PC-9 (cell line): ENCODE measurements at regions of chr7 and their contacts with region 1.

Region 1: DNA sequence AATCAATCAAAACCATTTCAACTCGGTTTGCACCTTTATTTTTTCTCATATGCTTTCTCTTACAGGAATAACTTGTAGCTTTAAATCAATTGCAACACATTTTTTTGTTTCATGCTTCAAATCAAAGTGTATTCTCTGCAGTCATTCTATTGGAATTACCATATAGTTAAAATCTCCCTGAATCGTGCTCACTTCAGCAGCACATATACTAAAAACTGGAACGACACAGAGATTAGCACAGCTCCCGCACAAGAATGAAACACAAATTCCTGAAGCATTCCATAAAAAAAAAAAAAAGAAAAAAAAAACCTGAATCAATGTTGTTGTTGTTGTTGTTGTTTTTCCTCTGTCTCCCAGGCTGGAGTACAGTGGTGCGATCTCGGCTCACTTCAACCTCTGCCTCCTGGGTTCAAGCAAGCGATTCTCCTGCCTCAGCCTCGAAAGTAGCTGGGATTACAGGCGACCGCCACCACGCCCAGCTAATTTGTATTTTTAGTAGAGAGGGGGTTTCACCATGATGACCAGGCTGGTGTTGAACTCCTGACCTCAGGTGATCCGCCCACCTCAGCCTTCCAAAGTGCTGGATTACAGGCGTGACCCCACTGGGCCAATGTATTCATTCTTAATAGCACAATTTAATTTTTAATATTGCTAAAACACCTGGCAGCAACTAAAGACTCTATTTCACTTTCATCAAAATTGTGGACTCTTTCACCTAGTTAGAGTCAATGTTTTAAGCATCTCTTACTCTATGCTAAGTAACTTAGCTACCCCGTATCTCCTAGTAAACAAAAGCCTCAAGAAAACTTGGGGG is 26.3 kb downstream of the ANKRD61 start:
- DNase-seq: no peak
- H3K4me3 ChIP-seq: peak overlapping the region; percentile 87
- H3K27ac ChIP-seq: peak overlapping the region; percentile 88; the same call in 1 of the 2 replicates
- H3K4me1 ChIP-seq: peaks cover 16% of the 10 kb centered on the region
- H3K27me3 ChIP-seq: no peaks in the 10 kb centered on the region
- CTCF ChIP-seq: no peak

Region 2: DNA sequence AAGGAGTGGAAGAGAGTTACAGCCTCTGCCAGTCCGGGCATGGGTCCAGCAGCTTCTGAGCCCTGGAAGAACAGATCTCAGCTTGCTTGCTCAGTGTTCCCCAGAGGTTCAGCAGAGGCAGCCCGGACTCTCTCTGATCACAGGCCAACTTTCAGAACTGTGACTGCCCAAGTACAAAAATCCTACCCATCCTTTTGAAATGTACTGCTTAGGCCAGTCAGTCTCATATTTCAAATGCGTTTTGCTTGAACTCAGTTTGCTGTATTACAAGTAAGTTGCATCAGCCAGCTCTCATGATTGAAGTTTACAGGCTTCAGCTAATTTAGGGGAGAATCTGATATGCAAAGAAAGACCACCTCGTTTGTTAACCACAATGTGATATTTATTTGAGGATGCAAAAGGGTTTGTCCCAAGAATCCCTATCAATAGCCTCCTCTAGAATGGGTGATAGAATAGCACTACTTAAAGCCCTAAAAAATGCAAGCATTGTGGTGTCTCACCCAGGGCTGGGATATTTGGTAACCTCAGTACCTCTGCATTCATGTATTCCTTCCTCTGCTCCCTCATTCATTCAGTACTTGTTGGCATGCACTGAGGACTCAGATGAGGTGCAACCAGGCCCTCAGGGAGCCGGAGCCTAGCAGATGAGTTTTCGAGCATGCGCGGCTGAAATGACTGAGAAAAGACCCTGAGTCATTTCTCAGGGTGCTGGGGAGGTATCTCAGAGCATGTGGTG is 41.4 kb before region 1 on chr7:
- CTCF ChIA-PET with region 1: no interaction called
- POLR2A ChIA-PET with region 1: interaction called, 14 read pairs
- intact Hi-C with region 1: no loop called
- DNase-seq: no peak
- H3K4me3 ChIP-seq: no peak overlapping the region
- H3K27ac ChIP-seq: peak overlapping the region; percentile 90
- H3K4me1 ChIP-seq: peaks cover 35% of the 10 kb centered on the region
- H3K27me3 ChIP-seq: no peaks in the 10 kb centered on the region
- CTCF ChIP-seq: no peak

Region 3: GRCh38 chr7:6026011-6026819 is 31.3 kb before region 1 on chr7:
- CTCF ChIA-PET with region 1: no interaction called
- POLR2A ChIA-PET with region 1: no interaction called
- intact Hi-C with region 1: no loop called
- DNase-seq: peak in 1 of 2 experiments; percentile 29
- H3K4me3 ChIP-seq: no peak overlapping the region
- H3K27ac ChIP-seq: no peak overlapping the region
- H3K4me1 ChIP-seq: no peaks in the 10 kb centered on the region
- H3K27me3 ChIP-seq: no peaks in the 10 kb centered on the region
- CTCF ChIP-seq: peak; percentile 57; the same call in 1 of the 2 replicates

Region 4: GRCh38 chr7:6071406-6071805 is 13.9 kb after region 1 on chr7:
- CTCF ChIA-PET with region 1: no interaction called
- POLR2A ChIA-PET with region 1: interaction called, 73 read pairs
- intact Hi-C with region 1: no loop called
- DNase-seq: no peak
- H3K4me3 ChIP-seq: no peak overlapping the region
- H3K27ac ChIP-seq: no peak overlapping the region
- H3K4me1 ChIP-seq: peaks cover 9% of the 10 kb centered on the region
- H3K27me3 ChIP-seq: no peaks in the 10 kb centered on the region
- CTCF ChIP-seq: no peak

Region 5: GRCh38 chr7:6130007-6130587 is 72.6 kb after region 1 on chr7:
- CTCF ChIA-PET with region 1: interaction called, 16 read pairs
- POLR2A ChIA-PET with region 1: no interaction called
- intact Hi-C with region 1: no loop called
- DNase-seq: no peak
- H3K4me3 ChIP-seq: no peak overlapping the region
- H3K27ac ChIP-seq: no peak overlapping the region
- H3K4me1 ChIP-seq: no peaks in the 10 kb centered on the region
- H3K27me3 ChIP-seq: no peaks in the 10 kb centered on the region
- CTCF ChIP-seq: no peak

Region 6: GRCh38 chr7:7221602-7222038 is 1164.1 kb after region 1 on chr7:
- CTCF ChIA-PET with region 1: no interaction called
- POLR2A ChIA-PET with region 1: no interaction called
- intact Hi-C with region 1: no loop called
- DNase-seq: peak; percentile 15 to 71
- H3K4me3 ChIP-seq: no peak overlapping the region
- H3K27ac ChIP-seq: peak overlapping the region; percentile 54
- H3K4me1 ChIP-seq: peaks cover 19% of the 10 kb centered on the region
- H3K27me3 ChIP-seq: no peaks in the 10 kb centered on the region
- CTCF ChIP-seq: no peak